Aorta (tissue), 5 donors: ENCODE measurements at regions of chr11 and their contacts with region 1.

Region 1: GRCh38 chr11:74988541-74989260 is at the start of gene NEU3:
- DNase-seq: peak; percentile 87 to 94
- ATAC-seq: peak; percentile 96
- H3K4me3 ChIP-seq: peak within 1 kb of the TSS; percentile 43 to 54
- H3K27ac ChIP-seq: peak within 1 kb of the TSS; percentile 6 to 26
- H3K4me1 ChIP-seq: peaks cover 0 to 3% of the 10 kb centered on the region in 2 donors
- H3K27me3 ChIP-seq: no peaks in the 10 kb centered on the region
- total RNA-seq, gene NEU3: 10.1 to 13.7 TPM

Region 2: GRCh38 chr11:74948898-74949747 is 39.6 kb before region 1 on chr11 and contains the starts of genes SPCS2 and XRRA1:
- intact Hi-C with region 1: loop called in 1 of 2 experiments (anchors 2 kb)
- DNase-seq: peak; percentile 100
- ATAC-seq: peak; percentile 99
- H3K4me3 ChIP-seq: peak within 1 kb of the TSS; percentile 96 to 98
- H3K27ac ChIP-seq: peak within 1 kb of the TSS; percentile 6 to 66
- H3K4me1 ChIP-seq: peaks cover 4% of the 10 kb centered on the region in 2 donors
- H3K27me3 ChIP-seq: no peaks in the 10 kb centered on the region
- total RNA-seq, gene SPCS2: 126 to 134 TPM
- total RNA-seq, gene XRRA1: 14.9 to 23.4 TPM